RWPE1 (cell line): ENCODE measurements at regions of chr6 and their contacts with region 1.

Region 1: DNA sequence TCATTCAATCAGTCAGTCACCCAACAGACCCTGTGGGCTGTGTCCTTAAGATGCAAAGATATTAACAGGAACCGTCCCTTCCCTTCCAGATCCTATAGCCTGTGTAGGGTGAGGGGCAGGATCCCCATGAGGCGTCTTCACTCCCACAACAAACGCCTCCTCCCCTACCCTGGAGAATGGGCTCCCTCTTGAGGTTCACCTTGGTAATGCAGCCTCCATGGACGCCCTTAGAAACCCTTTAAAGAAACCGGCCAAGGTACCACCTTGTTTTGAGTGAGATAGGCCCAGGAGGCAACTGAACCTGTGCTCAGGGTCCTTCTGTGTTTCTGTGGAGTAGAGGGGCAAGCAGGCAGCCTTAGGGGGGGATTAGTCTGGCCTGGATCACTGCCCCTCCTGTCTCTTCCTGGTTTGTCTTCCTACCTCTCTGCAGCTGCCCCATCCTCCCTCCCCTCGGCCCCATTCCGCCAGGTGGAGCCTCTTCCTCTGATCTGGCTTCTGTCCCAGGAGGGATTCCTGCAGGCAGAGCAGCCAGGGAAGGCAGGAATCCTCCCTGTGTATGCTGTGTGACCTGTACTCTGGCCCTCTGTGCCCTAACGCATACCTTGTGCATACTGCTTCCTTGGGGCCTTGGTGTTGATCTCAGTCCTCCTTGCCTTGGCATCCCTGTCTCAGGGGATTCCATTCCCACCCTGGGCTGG is 6.6 kb upstream of the GUCA1A start:
- DNase-seq: peak; percentile 89
- H3K27ac ChIP-seq: peak overlapping the region; percentile 71
- CTCF ChIP-seq: peak; percentile 94

Region 2: DNA sequence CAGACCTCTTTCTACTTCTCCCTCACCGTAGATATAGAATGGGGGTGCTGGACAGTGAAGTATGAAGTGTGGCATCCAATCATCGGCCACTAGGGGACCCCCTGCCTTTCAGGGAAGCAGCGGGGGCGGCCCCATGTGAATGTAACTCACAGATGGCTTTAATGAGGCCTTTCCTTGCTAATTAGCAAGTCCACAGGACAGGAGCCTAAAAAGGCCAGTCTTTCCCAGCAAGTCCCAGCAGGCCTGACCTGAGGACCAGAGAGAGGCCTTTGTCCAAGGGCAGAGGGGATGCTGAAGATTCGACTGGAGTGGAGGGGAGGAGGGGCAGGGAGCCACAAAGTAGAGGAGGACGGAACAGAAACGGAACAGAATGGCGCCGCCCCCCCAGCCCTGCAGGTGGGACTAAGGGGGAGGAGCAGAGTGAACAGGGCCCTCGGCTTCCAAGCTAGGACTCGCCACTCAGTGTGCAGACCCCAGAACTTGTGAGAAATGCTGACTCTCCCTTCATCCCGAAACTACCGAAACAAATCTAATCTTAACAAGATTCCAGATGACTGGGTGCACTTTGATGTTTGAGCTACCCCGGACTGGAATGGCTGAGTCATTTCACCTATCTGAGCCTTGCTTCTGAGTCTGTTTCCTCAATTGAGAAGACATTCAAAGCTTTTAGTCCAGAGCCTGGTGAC is 29.9 kb before region 1 on chr6:
- CTCF ChIA-PET with region 1: no interaction called
- POLR2A ChIA-PET with region 1: no interaction called
- DNase-seq: peak; percentile 88
- H3K27ac ChIP-seq: peak overlapping the region; percentile 87
- CTCF ChIP-seq: no peak

Region 3: DNA sequence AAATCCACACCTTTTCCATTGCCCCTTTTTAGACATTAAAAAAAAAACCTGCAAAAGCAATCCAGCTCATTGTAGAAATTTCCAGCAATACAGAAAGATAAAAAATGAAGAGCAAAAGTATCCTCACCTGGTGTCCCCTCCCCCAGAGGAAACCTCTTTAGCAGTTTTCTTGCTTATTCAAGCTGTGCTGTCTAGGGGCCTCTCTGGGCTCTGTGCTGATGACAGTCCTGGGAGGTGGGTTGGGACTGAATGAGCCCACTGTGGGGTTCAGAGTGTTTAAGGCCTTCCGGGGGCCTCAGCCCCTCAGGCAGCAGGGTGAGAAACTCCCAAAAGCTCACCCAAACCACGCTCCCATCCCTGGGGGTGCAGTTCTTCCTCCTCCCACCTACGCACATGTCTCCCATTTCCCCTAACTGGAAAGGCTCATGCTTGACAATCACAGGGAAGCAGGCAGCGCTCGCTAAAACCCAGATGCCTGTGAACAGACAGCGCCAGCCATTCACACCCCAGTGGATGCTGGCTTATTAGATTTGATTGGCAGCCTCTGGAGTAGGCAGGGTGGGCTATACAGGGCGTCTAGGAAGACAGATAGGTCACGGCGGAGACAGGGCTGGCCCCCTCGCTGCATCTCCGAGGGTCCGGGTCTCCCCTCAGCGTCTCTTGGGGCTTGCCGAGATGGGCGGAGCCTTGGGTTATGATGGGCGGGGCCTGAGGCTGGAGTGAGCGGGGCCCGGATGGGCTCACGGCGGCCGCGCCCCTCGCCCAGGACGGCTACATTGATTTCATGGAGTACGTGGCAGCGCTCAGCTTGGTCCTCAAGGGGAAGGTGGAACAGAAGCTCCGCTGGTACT is 11.1 kb after region 1 on chr6:
- CTCF ChIA-PET with region 1: interaction called, 15 read pairs
- POLR2A ChIA-PET with region 1: no interaction called
- DNase-seq: no peak
- H3K27ac ChIP-seq: no peak overlapping the region
- CTCF ChIP-seq: no peak

Region 4: GRCh38 chr6:42217519-42218367 is 51.1 kb after region 1 on chr6 and contains the start of gene MRPS10:
- CTCF ChIA-PET with region 1: interaction called, 16 read pairs
- POLR2A ChIA-PET with region 1: no interaction called
- DNase-seq: peak; percentile 91
- H3K27ac ChIP-seq: peak within 1 kb of the TSS; percentile 80
- CTCF ChIP-seq: no peak